ENCODE measurements at regions of chrX and their contacts with region 1.

Region 1: GRCh38 chrX:11787564-11787963 is 29.5 kb downstream of the MSL3 start:
- DNase-seq: peak; percentile 43 to 94 (median 72)

Region 2: GRCh38 chrX:10900585-10901289 is 886.8 kb before region 1 on chrX:
- intact Hi-C with region 1: no loop called
- DNase-seq: no peak

Region 3: GRCh38 chrX:12701628-12702027 is 914.1 kb after region 1 on chrX:
- intact Hi-C with region 1: loop called (anchors 10 kb)
- DNase-seq: peak in 9 of 10 donors; percentile 17 to 94 (median 53)